Activated CD8-positive, alpha-beta T cell treated with anti-CD3 and anti-CD28 coated beads for 36 hours (primary cell): ENCODE measurements at regions of chr5 and their contacts with region 1.

Region 1: DNA sequence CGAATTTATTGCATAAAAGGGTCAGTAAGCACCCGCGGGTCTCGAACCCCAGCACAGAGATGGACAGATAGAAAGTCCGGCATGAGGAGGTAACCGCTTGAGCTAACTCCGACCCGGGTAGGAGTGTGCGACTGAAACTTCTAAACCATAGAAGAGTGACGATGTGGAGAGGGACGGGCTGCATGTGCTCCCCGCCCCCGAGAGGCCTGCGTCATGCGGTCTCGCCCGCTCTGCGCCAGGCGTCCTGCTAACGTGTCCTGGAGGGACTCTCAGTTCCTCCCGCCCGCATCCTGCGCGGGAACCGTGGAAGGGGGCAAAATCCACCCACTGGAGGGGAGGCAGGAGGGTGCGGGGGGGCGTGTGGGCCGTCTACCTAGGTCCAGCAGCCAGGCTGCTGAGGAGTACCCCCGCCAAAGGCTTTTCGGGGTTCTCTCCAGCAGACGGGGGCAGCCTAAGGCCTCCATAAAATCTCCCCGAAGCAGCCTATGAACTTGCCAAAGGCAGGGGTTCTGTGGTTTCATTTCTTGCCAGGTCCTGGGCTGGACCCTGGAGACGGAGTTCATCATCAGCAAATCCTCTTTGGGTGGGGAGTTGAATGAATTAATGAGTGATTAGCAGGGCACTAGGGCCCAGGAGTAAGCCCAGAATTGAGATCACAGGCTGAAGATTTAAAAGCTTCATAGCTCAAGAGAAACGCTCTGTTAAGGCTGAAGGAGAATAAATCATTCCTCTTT is 51.9 kb downstream of the TGFBI start:
- DNase-seq: peak; percentile 87
- ATAC-seq: peak; percentile 95
- H3K4me3 Mint-ChIP-seq: peak overlapping the region; percentile 67
- H3K27ac Mint-ChIP-seq: peak overlapping the region; percentile 45
- H3K4me1 Mint-ChIP-seq: peaks cover 2% of the 10 kb centered on the region
- H3K27me3 Mint-ChIP-seq: peaks cover 39% of the 10 kb centered on the region
- CTCF ChIP-seq: no peak

Region 2: GRCh38 chr5:135977375-135977928 is 103.2 kb before region 1 on chr5:
- CTCF ChIA-PET with region 1: interaction called, 6 read pairs
- POLR2A ChIA-PET with region 1: no interaction called
- intact Hi-C with region 1: loop called (anchors 10 kb)
- DNase-seq: peak; percentile 62
- ATAC-seq: peak; percentile 91
- H3K4me3 Mint-ChIP-seq: no peak overlapping the region
- H3K27ac Mint-ChIP-seq: no peak overlapping the region
- H3K4me1 Mint-ChIP-seq: no peaks in the 10 kb centered on the region
- H3K27me3 Mint-ChIP-seq: peaks cover 29% of the 10 kb centered on the region
- CTCF ChIP-seq: peak; percentile 77